Activated CD8-positive, alpha-beta memory T cell treated with anti-CD3 and anti-CD28 coated beads, Interleukin-2, amount 10 ng/mL, durations not matched to agents 7 days and 5 days (primary cell): ENCODE measurements at regions of chr6 and their contacts with region 1.

Region 1: GRCh38 chr6:121055572-121056163 is 278.6 kb downstream of the TBC1D32 start:
- DNase-seq: no peak
- ATAC-seq: peak; percentile 36
- H3K4me3 Mint-ChIP-seq: no peak overlapping the region
- H3K27ac Mint-ChIP-seq: no peak overlapping the region
- H3K4me1 Mint-ChIP-seq: no peaks in the 10 kb centered on the region
- H3K27me3 Mint-ChIP-seq: no peaks in the 10 kb centered on the region

Region 2: GRCh38 chr6:121086876-121087275 is 31.2 kb after region 1 on chr6:
- CTCF ChIA-PET with region 1: no interaction called
- DNase-seq: no peak
- ATAC-seq: no peak
- H3K4me3 Mint-ChIP-seq: no peak overlapping the region
- H3K27ac Mint-ChIP-seq: no peak overlapping the region
- H3K4me1 Mint-ChIP-seq: no peaks in the 10 kb centered on the region
- H3K27me3 Mint-ChIP-seq: no peaks in the 10 kb centered on the region

Region 3: GRCh38 chr6:121305957-121306607 is 250.4 kb after region 1 on chr6:
- CTCF ChIA-PET with region 1: interaction called, 41 read pairs
- DNase-seq: no peak
- ATAC-seq: no peak
- H3K4me3 Mint-ChIP-seq: no peak overlapping the region
- H3K27ac Mint-ChIP-seq: no peak overlapping the region
- H3K4me1 Mint-ChIP-seq: peaks cover 7% of the 10 kb centered on the region
- H3K27me3 Mint-ChIP-seq: no peaks in the 10 kb centered on the region